Posterior cingulate gyrus (tissue), 11 donors: ENCODE measurements at regions of chr21 and their contacts with region 1.

Region 1: GRCh38 chr21:16194095-16194787 is 464.5 kb downstream of the USP25 start:
- DNase-seq: peak; percentile 40 to 95 (median 71)

Region 2: GRCh38 chr21:16264319-16264718 is 70.1 kb after region 1 on chr21:
- intact Hi-C with region 1: no loop called
- DNase-seq: no peak

Region 3: DNA sequence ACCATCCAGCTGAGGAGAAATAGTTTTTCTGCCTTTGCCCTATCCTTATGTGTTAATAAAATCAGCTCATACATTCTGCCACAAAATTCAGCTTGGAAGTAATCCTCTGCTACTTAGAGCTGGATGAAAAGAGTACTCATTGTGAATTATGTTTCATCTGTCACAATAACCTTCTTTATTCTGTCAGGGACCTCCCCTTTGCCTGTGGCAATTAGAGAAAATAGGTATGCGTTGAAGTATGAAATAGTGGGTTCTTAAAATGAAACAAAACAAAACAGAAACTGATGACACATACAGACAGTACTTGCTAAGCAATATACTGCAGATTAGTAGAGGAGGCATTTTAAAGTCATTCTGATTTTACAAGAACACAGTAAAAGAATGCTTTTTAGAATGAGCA is 114.0 kb after region 1 on chr21:
- intact Hi-C with region 1: loop called (anchors 10 kb)
- DNase-seq: no peak

Region 4: DNA sequence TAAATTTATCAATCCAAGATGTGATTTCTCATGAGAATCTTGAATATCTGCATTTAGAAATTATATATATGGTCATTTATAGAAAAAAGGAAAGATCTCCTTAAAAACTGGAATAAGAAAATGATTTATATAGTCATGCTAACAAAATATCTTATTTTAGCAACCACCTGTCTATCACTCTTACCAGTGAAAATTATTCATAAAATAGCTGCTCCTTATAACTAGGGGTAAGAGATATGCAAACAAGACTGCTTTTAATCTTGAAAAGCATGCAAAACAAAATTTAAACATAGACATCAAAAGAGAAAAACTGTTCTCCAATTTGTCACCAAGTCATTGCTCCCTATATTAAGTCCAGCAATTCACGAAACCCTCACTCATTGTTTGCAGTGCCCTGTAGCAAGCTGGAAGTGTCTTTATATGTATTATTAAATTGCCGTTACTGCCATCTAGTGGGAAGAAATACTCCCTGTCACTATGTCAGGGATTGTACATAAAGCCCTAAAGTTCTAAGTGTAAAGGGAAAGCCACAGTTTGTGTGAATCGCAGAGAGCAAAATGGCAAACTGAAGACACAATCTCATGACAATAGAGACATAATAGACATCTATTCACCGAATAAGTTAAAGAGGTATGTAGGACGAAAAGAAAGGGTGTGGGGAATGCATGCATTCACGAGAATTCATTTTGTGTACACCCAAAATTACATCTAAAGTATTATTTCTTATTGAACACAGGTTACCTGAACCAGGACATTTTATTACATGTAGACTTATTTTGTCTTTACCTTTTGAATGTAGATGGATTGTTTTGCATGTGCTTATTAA is 136.1 kb after region 1 on chr21:
- intact Hi-C with region 1: loop called (anchors 10 kb)
- DNase-seq: peak in 1 of 10 donors; percentile 20